ENCODE measurements at regions of chr11 and their contacts with region 1.

Region 1: DNA sequence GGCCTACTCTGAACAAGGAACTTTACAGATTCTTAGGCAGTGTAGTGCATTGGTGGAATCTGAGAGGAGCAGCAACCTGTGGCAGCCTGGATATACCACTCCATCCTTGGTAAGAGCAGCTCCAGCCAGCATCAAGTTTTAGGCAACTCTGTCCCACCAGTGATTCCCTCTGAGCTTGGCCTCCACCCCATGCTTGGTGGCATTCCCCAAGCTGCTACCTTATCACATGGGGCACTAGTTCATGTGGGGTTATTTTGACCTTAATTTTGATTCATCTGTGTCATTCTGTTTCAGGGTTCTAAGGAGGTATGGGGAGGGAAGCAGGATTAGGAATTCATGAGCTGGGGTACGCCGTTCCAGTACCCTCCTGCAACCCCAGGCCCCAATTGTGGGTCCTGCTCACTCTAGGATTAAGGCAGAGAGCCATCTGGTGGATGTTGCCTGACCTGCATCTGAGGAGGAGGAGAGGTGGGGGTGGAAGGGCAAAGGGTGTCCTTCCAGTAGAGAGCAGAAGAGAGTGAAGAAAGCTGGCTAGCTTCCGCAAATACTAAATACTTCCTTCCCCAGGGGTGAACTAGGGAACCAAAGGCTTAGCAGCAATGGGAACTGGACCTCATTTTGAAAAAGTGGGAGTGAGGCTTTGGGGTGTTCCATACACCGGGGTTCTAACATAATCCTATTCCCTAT is 10.5 kb downstream of the LRRC51 start:
- DNase-seq: peak; percentile 50 to 79 (median 74)
- ATAC-seq: peak; percentile 99
- H3K4me3 ChIP-seq: no peak overlapping the region
- H3K4me3 Mint-ChIP-seq: no peak overlapping the region
- H3K27ac ChIP-seq: peak overlapping the region; percentile 14
- H3K27ac Mint-ChIP-seq: peak overlapping the region in 8 of 9 donors; percentile 18 to 90 (median 64)
- H3K4me1 ChIP-seq: peaks cover 0 to 3% of the 10 kb centered on the region in 2 donors
- H3K4me1 Mint-ChIP-seq: peaks cover 11 to 18% (median 13%) of the 10 kb centered on the region in 7 donors
- H3K27me3 ChIP-seq: no peaks in the 10 kb centered on the region
- H3K27me3 Mint-ChIP-seq: no peaks in the 10 kb centered on the region

Region 2: GRCh38 chr11:72024069-72024754 is 66.9 kb before region 1 on chr11:
- CTCF ChIA-PET with region 1: interaction called, 143 read pairs
- POLR2A ChIA-PET with region 1: interaction called, 13 read pairs
- intact Hi-C with region 1: loop called (anchors 1 kb)
- DNase-seq: no peak
- ATAC-seq: no peak
- H3K4me3 ChIP-seq: no peak overlapping the region
- H3K4me3 Mint-ChIP-seq: no peak overlapping the region
- H3K27ac ChIP-seq: peak overlapping the region; percentile 6
- H3K27ac Mint-ChIP-seq: peak overlapping the region in 5 of 9 donors; percentile 14 to 79 (median 33)
- H3K4me1 ChIP-seq: peaks cover 6 to 13% of the 10 kb centered on the region in 2 donors
- H3K4me1 Mint-ChIP-seq: peaks cover 18 to 47% (median 39%) of the 10 kb centered on the region in 7 donors
- H3K27me3 ChIP-seq: no peaks in the 10 kb centered on the region
- H3K27me3 Mint-ChIP-seq: no peaks in the 10 kb centered on the region

Region 3: GRCh38 chr11:72072348-72072747 is 18.8 kb before region 1 on chr11:
- CTCF ChIA-PET with region 1: interaction called, 22 read pairs
- POLR2A ChIA-PET with region 1: no interaction called
- intact Hi-C with region 1: no loop called
- DNase-seq: no peak
- ATAC-seq: no peak
- H3K4me3 ChIP-seq: no peak overlapping the region
- H3K4me3 Mint-ChIP-seq: no peak overlapping the region
- H3K27ac ChIP-seq: no peak overlapping the region
- H3K27ac Mint-ChIP-seq: peak overlapping the region in 2 of 9 donors; percentile 39 to 57
- H3K4me1 ChIP-seq: peaks cover 0 to 4% of the 10 kb centered on the region in 2 donors
- H3K4me1 Mint-ChIP-seq: peaks cover 24 to 68% (median 42%) of the 10 kb centered on the region in 7 donors
- H3K27me3 ChIP-seq: no peaks in the 10 kb centered on the region
- H3K27me3 Mint-ChIP-seq: no peaks in the 10 kb centered on the region

Region 4: GRCh38 chr11:72102946-72103753 is 12.0 kb after region 1 on chr11 and contains the start of gene LAMTOR1:
- CTCF ChIA-PET with region 1: interaction called, 18 read pairs
- POLR2A ChIA-PET with region 1: interaction called, 10 read pairs
- intact Hi-C with region 1: no loop called
- DNase-seq: peak; percentile 87 to 98 (median 95)
- ATAC-seq: peak; percentile 98
- H3K4me3 ChIP-seq: peak within 1 kb of the TSS; percentile 54
- H3K4me3 Mint-ChIP-seq: peak within 1 kb of the TSS; percentile 66 to 97 (median 86)
- H3K27ac ChIP-seq: peak within 1 kb of the TSS; percentile 93
- H3K27ac Mint-ChIP-seq: peak within 1 kb of the TSS; percentile 83 to 98 (median 94)
- H3K4me1 ChIP-seq: peaks cover 20% of the 10 kb centered on the region in 2 donors
- H3K4me1 Mint-ChIP-seq: peaks cover 37 to 49% (median 44%) of the 10 kb centered on the region in 7 donors
- H3K27me3 ChIP-seq: no peaks in the 10 kb centered on the region
- H3K27me3 Mint-ChIP-seq: no peaks in the 10 kb centered on the region
- total RNA-seq, gene LAMTOR1: 41.8 to 83.0 (median 69.7) TPM

Region 5: DNA sequence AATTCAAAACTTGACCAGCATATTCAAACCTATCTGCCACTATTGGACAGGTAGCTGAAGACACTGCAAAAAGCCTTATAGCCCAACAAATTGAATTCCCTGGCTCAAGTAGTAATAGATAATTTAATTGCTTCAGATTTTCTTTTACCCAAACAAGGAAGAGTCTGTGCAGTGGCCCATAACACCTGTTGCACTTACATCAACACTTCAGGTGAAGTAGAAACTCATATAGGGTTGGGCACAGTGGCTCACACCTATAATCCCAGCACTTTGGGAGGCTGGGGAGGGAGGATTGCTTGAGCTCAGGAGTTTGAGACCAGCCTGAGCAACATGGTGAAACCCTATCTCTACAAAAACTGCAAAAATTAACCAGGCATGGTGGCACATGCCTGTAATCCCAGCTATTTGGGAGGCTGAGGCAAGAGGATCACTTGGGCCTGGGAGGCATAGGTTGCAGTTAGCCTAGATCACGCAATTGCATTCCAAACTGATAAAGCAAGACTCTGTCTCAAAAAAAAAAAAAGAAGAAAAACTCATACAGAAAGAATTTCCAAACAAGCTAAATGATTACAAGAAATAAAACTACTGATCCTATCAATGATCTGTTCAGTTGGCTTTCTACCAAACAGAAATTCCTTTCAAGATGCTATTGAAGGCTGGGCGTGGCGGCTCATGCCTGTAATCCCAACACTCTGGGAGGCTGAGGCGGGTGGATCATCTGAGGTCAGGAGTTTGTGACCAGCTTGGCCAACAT is 53.8 kb after region 1 on chr11:
- CTCF ChIA-PET with region 1: interaction called, 4 read pairs
- POLR2A ChIA-PET with region 1: no interaction called
- intact Hi-C with region 1: loop called in 1 of 2 experiments (anchors 1 kb)
- DNase-seq: no peak
- ATAC-seq: no peak
- H3K4me3 ChIP-seq: no peak overlapping the region
- H3K4me3 Mint-ChIP-seq: no peak overlapping the region
- H3K27ac ChIP-seq: no peak overlapping the region
- H3K27ac Mint-ChIP-seq: no peak overlapping the region
- H3K4me1 ChIP-seq: no peaks in the 10 kb centered on the region
- H3K4me1 Mint-ChIP-seq: peaks cover 0 to 18% (median 3%) of the 10 kb centered on the region in 7 donors
- H3K27me3 ChIP-seq: no peaks in the 10 kb centered on the region
- H3K27me3 Mint-ChIP-seq: peaks cover 1 to 15% (median 4%) of the 10 kb centered on the region in 5 donors

Measured in naive thymus-derived CD4-positive, alpha-beta T cell (primary cell).